GM23248 (cell line): ENCODE measurements at regions of chr5 and their contacts with region 1.

Region 1: GRCh38 chr5:32232441-32233219 is 58.5 kb upstream of the GOLPH3 start:
- DNase-seq: peak; percentile 86
- H3K4me3 ChIP-seq: no peak overlapping the region
- H3K27ac ChIP-seq: no peak overlapping the region
- H3K4me1 ChIP-seq: peaks cover 10% of the 10 kb centered on the region
- H3K27me3 ChIP-seq: no peaks in the 10 kb centered on the region

Region 2: DNA sequence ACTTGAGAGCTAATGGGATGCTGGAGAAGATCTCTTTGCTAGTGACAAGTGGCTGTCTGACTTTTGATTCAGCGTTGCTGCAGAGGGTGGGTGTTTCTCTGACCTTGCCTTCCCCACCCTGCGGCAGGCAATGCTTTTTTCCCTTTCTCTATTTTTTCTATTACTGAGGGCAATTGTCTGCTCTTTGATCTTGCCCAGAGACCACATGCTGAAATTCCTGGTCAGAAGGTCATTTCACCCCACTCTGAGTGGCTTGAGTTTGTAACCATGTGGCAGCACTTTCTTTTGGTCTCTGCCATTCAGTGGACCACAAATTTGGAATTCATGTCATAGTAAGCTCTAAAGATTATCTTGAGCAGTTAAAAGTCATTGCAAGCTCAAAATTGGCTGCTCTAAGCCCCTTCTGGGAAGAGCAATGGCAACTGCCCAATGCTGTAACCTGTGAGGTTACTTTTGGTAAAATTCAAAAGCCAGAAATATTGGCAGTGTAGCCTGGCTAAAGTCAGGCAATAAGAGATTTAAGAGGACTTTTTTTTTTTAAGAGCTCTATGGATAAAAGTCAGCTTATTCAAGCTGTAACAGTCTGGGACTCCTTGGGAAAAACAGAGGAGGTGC is 110.5 kb after region 1 on chr5:
- in situ Hi-C with region 1: no loop called
- DNase-seq: no peak
- H3K4me3 ChIP-seq: no peak overlapping the region
- H3K27ac ChIP-seq: no peak overlapping the region
- H3K4me1 ChIP-seq: no peaks in the 10 kb centered on the region
- H3K27me3 ChIP-seq: no peaks in the 10 kb centered on the region

Region 3: DNA sequence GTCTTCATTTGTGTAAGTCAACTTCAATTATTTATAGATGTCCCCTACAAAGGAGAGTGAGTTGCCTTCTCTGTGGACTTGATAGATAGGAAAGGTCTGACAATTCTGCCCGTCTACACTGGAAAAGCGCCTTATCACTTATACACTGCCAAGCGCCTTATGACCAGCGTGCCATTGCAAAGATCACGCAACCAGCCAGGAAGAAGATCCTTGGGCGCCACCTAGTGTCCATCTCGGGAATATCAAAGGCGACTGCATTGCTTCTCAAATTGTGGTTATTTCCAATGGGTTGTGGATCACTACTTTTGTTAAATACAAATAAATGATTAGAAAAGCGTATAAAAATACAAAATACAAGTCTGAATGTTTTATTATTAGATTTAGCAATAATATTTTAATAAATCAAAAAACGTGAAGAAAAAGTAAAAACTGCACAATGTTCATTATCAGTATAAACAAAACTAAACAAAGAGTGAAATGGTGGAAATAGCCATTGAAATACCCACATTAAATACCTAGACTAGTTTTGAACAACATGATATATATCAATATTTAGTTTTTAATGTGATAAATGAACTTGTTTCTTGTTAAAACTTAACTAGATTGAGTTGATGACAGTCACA is 380.5 kb after region 1 on chr5:
- in situ Hi-C with region 1: loop called (anchors 25 kb)
- DNase-seq: peak; percentile 82
- H3K4me3 ChIP-seq: no peak overlapping the region
- H3K27ac ChIP-seq: no peak overlapping the region
- H3K4me1 ChIP-seq: peaks cover 13% of the 10 kb centered on the region
- H3K27me3 ChIP-seq: no peaks in the 10 kb centered on the region